ENCODE measurements at regions of chr13 and their contacts with region 1.

Region 1: DNA sequence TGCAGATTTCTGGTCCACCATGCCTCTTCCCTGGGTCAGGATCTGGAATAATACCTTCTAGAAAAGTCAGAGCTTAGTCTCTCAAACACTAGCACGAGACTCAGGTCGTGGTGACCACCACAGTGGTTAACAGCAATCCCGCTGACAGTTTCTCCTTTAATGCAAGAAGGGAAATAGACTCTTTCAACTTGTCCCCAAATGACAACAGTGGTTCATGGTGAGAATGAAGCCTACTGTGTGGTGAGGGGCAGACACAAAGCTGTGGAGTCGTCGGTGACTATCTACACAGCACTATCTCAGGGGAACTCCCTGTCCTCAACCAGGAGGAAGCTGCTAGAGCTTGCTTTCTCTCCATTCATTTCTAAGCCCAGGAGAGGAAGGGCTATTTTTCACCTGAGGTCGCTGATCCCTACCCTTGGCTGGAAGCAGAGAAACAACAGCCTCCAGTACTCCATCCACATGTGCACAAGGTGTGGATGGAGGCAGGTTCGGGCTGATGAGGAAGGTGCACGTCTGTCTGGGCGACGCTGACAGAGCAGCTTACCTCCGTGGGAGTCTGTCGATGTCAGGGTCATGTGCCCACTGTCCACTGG is 72.4 kb downstream of the STK24 start:
- DNase-seq: peak; percentile 66
- CTCF ChIP-seq: no peak

Region 2: GRCh38 chr13:98570929-98571372 is 66.5 kb after region 1 on chr13:
- CTCF ChIA-PET with region 1: interaction called, 12 read pairs
- POLR2A ChIA-PET with region 1: interaction called, 3 read pairs
- DNase-seq: peak; percentile 81
- CTCF ChIP-seq: no peak

Measured in GM10248 (cell line).